ENCODE measurements at regions of chr1 and their contacts with region 1.

Region 1: DNA sequence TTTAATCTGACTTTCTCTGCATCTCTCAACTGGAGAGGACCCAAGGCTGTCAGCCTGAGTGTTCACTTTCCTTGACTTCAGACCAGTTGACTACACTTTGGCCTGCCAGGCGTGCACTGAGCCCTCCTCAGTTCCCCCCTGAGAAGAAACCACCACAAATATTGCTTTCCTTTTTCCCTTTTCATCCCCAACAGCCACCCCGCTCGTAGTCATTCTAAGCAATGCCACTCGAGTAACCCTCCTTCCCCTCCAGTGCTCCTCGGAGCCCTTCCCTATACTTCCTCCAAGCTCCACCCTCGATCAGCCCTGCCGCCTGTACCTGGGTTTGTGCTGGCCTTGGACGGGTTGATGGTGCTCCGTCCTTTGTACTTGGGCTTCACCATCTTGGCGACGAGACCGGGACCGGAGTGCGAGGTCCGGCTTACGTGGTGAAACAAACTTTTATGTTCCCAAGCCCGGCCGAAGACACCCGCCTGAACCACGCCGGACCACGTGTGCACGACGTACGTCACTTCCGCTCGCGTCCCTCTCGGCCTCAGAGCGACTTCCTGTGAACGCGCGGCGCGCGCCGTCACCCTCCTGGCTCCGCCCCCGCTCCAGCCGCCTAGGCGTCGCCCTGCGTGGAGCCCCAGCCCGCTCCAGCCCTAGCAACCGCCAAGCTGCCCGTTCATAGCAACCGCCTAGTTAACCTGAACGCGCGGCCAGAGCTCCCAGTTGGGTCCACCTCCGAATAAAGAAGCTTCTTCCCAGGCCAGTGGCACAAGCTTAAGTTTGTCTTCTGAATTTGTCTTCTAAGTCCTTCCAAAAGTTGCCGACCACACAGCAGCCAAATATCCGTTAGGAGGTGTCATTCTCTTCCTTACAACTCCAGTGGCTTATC is at the start of gene GNL2:
- DNase-seq: peak; percentile 97 to 99
- ATAC-seq: peak; percentile 100
- H3K4me3 ChIP-seq: peak within 1 kb of the TSS; percentile 59 to 78 (median 70)
- H3K27ac ChIP-seq: peak within 1 kb of the TSS; percentile 2 to 85 (median 76)
- H3K4me1 ChIP-seq: peaks cover 6 to 28% (median 20%) of the 10 kb centered on the region in 9 donors
- H3K27me3 ChIP-seq: no peaks in the 10 kb centered on the region
- CTCF ChIP-seq: peak in 2 of 9 donors; percentile 6 to 11
- total RNA-seq, gene GNL2: 20.2 to 35.4 (median 22.3) TPM

Region 2: DNA sequence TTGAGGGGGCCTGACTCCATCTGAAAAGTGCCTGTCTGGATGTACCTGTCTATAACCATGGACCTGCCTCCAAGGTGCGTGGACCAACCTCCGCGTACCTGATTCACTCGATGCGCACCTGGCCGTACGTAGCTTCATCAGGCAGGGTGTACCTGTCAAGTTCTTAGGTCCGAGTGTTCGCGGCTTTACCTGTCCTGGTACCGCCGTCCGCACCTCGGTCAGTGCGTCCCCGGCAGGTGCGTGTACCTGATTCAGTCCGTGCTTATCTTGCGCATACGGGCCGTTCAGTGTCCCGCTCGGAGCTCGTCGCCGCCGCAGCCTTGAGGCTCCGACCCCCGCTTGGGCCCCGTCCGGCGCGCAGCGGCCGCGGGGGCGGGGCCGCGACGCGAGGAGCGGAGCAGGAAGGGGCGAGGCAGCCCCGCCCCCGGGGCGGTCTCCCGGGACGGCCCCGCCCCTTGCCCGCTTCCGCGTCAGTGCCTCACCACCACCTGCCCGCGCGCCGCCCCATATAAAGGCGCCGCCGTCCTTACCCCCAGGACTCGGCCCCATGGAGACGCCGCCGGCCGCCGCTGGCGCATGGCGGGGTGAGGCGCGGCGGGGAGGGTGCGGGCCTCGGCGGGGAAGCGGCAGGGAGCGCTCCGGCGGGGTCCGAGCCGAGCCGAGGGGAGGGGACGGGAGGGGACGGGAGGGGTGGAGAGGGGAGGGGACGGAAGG is 121.5 kb before region 1 on chr1 and contains the start of gene ZC3H12A:
- intact Hi-C with region 1: loop called in 2 of 10 experiments (anchors 5 kb)
- DNase-seq: peak; percentile 85 to 91
- ATAC-seq: peak; percentile 78 to 94 (median 88)
- H3K4me3 ChIP-seq: peak within 1 kb of the TSS; percentile 59 to 98 (median 92)
- H3K27ac ChIP-seq: peak within 1 kb of the TSS; percentile 62 to 98 (median 94)
- H3K4me1 ChIP-seq: peaks cover 23 to 80% (median 74%) of the 10 kb centered on the region in 9 donors
- H3K27me3 ChIP-seq: no peaks in the 10 kb centered on the region
- CTCF ChIP-seq: no peak
- total RNA-seq, gene ZC3H12A: 2.9 to 10.9 (median 4.9) TPM

Region 3: DNA sequence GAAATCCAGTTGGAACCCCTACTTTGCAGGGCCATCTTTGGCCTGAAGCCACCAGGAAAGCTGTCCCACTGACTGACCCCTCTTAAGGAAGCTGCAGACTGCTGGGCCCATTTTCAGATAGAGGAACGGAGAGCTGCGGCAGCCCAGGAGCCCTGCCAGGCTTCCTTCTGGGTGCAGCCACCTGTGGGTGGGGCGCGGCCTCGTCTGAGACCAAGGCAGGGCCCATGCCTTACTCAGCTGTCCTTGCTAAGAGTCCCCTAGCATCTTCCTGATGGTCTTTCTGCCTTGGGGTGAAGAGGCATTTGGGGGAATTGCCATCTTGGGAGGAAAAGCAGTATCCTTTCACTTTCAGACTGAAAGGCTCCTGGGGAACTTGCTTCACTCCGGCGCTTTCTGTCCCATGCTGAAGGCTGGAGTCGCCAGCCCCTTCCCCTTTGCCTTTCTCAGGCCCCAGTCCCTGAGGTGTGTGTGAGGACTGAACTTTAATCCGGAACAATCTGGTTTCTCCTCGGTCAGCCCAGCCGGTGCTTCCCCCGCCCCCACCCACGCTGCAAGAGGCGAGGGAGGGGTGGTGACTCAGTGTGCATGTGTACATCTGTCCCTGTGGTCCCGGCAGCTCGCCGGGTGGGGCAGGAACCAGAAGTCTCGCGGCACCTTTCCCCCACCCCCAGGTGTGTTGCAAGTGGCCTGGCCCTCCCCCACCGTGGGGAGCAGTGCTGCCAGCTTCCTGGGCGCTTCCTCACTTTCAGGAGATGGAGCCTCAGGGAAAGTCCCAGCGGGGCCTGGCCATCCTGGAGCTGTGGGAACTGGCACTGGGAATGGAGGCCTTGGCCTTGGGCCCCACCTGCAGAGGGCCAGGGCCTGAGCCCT is 116.2 kb before region 1 on chr1:
- intact Hi-C with region 1: loop called in 2 of 10 experiments (anchors 5 kb)
- DNase-seq: peak; percentile 64 to 68
- ATAC-seq: peak; percentile 12 to 75 (median 48)
- H3K4me3 ChIP-seq: peak overlapping the region in 9 of 10 donors; percentile 18 to 92 (median 36)
- H3K27ac ChIP-seq: peak overlapping the region; percentile 11 to 98 (median 82)
- H3K4me1 ChIP-seq: peaks cover 20 to 65% (median 56%) of the 10 kb centered on the region in 9 donors
- H3K27me3 ChIP-seq: no peaks in the 10 kb centered on the region
- CTCF ChIP-seq: no peak

Region 4: DNA sequence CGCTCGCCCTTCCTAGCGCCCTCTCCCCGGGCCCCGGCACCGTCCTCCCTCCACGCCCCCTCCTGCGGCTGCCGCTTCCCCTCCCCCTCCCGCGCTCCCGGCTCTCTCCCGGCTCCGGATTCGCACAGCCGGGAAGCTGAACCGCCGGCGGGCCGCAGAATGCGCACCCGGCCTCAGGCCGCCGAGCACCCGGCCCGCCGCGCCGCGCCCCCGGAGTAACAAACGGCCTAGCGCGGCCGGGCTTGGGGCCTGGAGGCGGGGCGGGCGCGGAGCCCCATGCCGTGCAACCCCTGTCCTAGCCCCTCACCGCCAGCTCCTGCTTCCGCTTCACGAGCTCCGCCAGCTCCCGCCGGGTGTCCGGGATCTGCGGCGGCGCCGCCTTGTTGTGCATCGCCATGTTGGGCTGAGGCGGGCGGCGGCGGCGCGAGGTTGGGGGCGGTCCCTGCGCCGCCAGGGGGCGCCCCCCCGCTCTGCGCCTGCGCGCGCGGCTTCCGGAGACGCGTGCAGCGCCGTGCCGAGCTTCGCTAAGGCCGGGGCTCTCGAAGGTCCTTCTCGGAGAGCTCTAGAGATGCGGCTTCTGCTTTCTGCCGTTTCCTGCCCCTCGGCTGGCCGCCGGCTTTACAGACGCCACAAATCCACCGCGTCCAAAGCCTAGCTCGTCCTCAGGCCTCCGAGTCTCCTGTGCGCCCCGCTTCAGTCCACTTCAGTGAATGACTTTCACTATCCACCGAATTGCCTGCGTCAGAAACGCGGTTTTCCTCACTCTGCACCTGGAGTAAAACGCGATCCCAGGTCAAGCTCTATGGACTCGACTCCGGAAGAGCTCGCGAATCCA is 81.1 kb before region 1 on chr1 and contains the start of gene MEAF6:
- intact Hi-C with region 1: loop called in 2 of 10 experiments (anchors 10 kb)
- DNase-seq: peak; percentile 80 to 88
- ATAC-seq: peak; percentile 97 to 99 (median 99)
- H3K4me3 ChIP-seq: peak within 1 kb of the TSS; percentile 59 to 96 (median 83)
- H3K27ac ChIP-seq: peak within 1 kb of the TSS; percentile 69 to 99 (median 96)
- H3K4me1 ChIP-seq: peaks cover 6 to 30% (median 20%) of the 10 kb centered on the region in 9 donors
- H3K27me3 ChIP-seq: peaks cover 0 to under 1% (median 0%) of the 10 kb centered on the region in 7 donors
- CTCF ChIP-seq: peak; percentile 53 to 92 (median 77)
- total RNA-seq, gene MEAF6: 27.8 to 59.9 (median 38.0) TPM

Region 5: DNA sequence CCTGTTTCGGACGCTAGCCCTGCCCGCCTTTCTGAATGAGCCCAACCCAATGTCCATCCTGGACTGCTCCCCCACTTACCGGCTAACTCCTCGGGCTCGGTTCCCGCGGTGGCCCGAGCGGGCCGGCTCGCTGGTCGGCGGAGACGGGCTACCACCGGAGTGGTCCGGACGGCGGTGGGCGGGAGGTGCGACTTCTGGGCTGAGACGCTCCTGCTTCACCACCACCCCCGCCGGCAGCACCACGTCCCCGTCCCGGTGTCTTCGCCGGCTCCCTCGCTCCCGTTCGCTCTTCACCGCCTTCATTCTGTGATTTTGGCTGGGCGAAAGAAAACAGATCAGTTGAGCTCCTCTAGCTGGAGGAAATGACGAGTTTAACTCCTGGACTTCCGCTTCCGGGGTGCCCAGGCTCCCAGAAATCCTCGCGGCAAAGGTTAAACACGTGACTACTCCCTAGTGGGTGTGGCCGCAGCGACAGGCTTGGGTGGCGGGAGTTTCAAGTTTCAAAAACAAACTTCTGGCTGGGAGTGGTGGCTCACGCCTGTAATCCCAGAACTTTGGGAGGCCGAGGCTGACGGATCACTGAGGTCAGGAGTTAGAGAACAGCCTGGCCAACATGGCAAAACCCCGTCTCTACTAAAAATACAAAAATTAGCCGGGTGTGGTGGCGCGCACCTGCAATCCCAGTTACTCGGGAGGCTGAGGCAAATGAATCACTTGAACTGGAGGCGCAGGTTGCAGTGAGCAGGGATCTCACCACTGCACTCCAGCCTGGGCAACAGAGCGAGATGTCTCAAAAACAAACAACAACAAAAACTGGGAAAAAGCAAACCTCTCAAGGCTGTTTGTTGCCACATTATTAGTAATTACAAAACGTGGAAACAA is 41.5 kb before region 1 on chr1 and contains the start of gene SNIP1:
- intact Hi-C with region 1: loop called in 1 of 10 experiments (anchors 5 kb)
- DNase-seq: peak; percentile 86 to 95
- ATAC-seq: peak; percentile 94 to 98 (median 96)
- H3K4me3 ChIP-seq: peak within 1 kb of the TSS; percentile 75 to 100 (median 93)
- H3K27ac ChIP-seq: peak within 1 kb of the TSS; percentile 46 to 95 (median 85)
- H3K4me1 ChIP-seq: peaks cover 11 to 53% (median 35%) of the 10 kb centered on the region in 9 donors
- H3K27me3 ChIP-seq: no peaks in the 10 kb centered on the region
- CTCF ChIP-seq: no peak
- total RNA-seq, gene SNIP1: 6.0 to 12.1 (median 9.2) TPM

Region 6: GRCh38 chr1:37567023-37567422 is 28.7 kb before region 1 on chr1:
- intact Hi-C with region 1: no loop called
- DNase-seq: no peak
- ATAC-seq: no peak
- H3K4me3 ChIP-seq: no peak overlapping the region
- H3K27ac ChIP-seq: no peak overlapping the region
- H3K4me1 ChIP-seq: no peaks in the 10 kb centered on the region
- H3K27me3 ChIP-seq: no peaks in the 10 kb centered on the region
- CTCF ChIP-seq: no peak

Region 7: DNA sequence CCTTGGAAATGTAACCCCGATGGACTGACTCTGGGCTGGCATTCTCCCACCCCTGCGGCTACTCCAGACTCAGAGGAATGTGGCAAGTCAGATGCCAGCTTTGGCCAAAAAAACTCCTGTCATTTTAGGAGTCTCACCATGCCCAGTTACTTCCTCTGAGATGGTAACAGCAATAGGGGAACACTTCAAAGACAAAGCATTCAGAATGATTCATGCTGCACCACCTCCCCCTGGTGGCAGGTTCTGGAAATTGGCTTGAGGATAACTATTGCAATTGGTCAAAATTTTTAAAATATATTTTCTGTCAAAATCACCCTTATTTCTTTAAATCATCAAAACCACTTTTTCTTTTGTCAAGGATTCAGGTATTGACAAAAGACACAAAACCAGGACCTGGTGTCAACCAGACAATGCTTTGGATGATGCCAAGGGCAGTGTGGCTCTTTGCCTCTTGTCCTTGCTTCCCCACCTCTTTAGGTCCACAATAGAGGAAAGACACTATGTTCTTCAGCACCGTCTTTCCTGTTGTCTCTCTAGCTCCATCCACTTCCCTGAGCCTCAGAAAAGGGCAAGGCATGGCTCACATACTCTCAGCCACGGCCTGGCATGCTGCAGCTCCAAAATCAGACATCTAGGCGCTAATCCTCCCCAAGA is 86.8 kb after region 1 on chr1:
- intact Hi-C with region 1: loop called in 6 of 10 experiments (anchors 2 to 5 kb)
- DNase-seq: peak; percentile 46 to 71
- ATAC-seq: peak in 5 of 8 donors; percentile 56 to 78 (median 64)
- H3K4me3 ChIP-seq: no peak overlapping the region
- H3K27ac ChIP-seq: no peak overlapping the region
- H3K4me1 ChIP-seq: peaks cover 0 to 3% (median 0%) of the 10 kb centered on the region in 9 donors
- H3K27me3 ChIP-seq: no peaks in the 10 kb centered on the region
- CTCF ChIP-seq: peak; percentile 74 to 90 (median 87)

Measured in heart right ventricle (tissue), 16 donors.